ENCODE measurements at regions of chr1 and their contacts with region 1.

Region 1: DNA sequence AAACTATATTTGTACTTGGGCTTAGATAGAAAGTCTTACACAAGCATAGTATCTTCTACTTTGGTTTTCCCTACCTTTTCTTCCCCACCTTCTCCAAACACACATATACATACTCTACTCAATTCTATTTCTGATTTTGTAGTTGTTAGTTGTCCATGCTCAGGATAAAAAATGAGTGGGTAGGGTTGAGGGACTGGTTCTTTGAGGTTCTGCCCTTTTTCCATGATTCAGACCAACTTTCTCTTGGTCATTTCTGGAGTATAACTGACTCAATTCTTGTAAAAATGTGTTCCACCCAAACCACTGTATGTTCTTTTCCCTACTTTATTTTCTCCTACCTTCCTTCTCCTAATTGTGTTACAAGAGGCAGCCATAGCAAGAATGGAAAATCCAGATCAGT is 3.3 kb downstream of the CFAP126 start:
- DNase-seq: no peak
- ATAC-seq: no peak
- H3K4me3 ChIP-seq: no peak overlapping the region
- H3K27ac ChIP-seq: no peak overlapping the region
- H3K4me1 ChIP-seq: peaks cover 3% of the 10 kb centered on the region; the same call in 1 of the 2 replicates
- H3K27me3 ChIP-seq: no peaks in the 10 kb centered on the region
- CTCF ChIP-seq: no peak

Region 2: GRCh38 chr1:161324020-161324419 is 40.3 kb before region 1 on chr1:
- CTCF ChIA-PET with region 1: no interaction called
- POLR2A ChIA-PET with region 1: no interaction called
- intact Hi-C with region 1: loop called (anchors 5 kb)
- DNase-seq: no peak
- ATAC-seq: no peak
- H3K4me3 ChIP-seq: no peak overlapping the region
- H3K27ac ChIP-seq: no peak overlapping the region
- H3K4me1 ChIP-seq: no peaks in the 10 kb centered on the region
- H3K27me3 ChIP-seq: no peaks in the 10 kb centered on the region
- CTCF ChIP-seq: no peak

Region 3: DNA sequence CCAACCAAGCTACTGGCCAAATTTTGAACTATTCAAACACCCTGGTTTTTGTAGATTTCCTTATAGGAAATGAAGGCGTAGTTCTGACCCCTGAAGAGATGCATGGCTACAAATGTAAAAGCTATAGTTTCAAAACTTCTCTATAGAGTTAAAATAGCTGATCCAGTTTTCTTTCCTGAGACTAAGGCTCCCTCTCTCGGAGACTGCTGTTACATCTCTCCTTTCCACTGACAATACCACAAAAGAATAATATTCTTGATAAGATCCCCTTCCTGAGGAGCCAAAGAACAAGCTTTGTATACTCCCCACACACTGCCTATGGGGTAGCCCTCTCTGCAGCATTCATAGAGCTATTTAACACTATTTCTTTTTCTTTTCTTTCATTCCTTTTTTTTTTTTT is 10.0 kb after region 1 on chr1:
- CTCF ChIA-PET with region 1: no interaction called
- POLR2A ChIA-PET with region 1: no interaction called
- intact Hi-C with region 1: no loop called
- DNase-seq: peak; percentile 53
- ATAC-seq: peak; percentile 76
- H3K4me3 ChIP-seq: no peak overlapping the region
- H3K27ac ChIP-seq: no peak overlapping the region
- H3K4me1 ChIP-seq: no peaks in the 10 kb centered on the region
- H3K27me3 ChIP-seq: no peaks in the 10 kb centered on the region
- CTCF ChIP-seq: peak; percentile 66

Region 4: GRCh38 chr1:161432091-161432490 is 67.8 kb after region 1 on chr1:
- CTCF ChIA-PET with region 1: no interaction called
- POLR2A ChIA-PET with region 1: no interaction called
- intact Hi-C with region 1: no loop called
- DNase-seq: no peak
- ATAC-seq: no peak
- H3K4me3 ChIP-seq: no peak overlapping the region
- H3K27ac ChIP-seq: no peak overlapping the region
- H3K4me1 ChIP-seq: no peaks in the 10 kb centered on the region
- H3K27me3 ChIP-seq: no peaks in the 10 kb centered on the region
- CTCF ChIP-seq: no peak

Measured in PC-3 (cell line).